ENCODE measurements at regions of chr13 and their contacts with region 1.

Region 1: GRCh38 chr13:40318366-40318765 is 348.1 kb downstream of the FOXO1 start:
- DNase-seq: no peak
- ATAC-seq: no peak
- H3K4me3 ChIP-seq: no peak overlapping the region
- H3K4me3 Mint-ChIP-seq: peak overlapping the region in 1 of 10 donors; percentile 20
- H3K27ac ChIP-seq: no peak overlapping the region
- H3K27ac Mint-ChIP-seq: peak overlapping the region in 5 of 9 donors; percentile 17 to 85 (median 67)
- H3K4me1 ChIP-seq: peaks cover 5 to 35% of the 10 kb centered on the region in 2 donors
- H3K4me1 Mint-ChIP-seq: peaks cover 39 to 71% (median 68%) of the 10 kb centered on the region in 7 donors
- H3K27me3 ChIP-seq: no peaks in the 10 kb centered on the region
- H3K27me3 Mint-ChIP-seq: no peaks in the 10 kb centered on the region

Region 2: DNA sequence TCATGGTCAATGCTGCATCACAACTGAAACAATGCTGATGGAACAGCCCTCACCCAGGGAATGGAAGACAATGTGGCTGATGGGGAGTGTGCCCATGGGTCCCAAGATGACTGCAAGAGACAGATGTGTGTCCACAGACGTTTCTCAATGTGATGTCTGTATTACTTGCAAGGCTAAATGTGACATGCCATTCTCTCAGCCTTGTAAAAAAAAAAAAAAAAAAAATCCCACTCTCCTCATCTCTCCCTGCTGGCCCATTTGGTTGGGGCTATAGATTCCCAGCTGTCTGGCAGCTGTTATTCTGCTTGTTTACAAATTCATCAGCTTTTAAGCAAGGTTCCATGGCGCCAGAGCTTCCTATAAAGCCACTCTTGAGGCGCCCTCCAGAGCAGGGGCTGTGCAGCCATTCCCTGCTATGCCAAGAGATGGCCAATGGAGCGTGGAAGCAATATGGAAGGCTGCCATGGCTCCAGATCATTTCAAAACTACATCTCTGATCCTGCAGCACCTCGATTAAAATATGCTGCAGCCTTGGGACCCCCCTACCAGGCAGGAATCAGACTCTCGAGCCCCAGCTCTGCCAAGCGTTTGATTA is 53.3 kb after region 1 on chr13:
- CTCF ChIA-PET with region 1: no interaction called
- POLR2A ChIA-PET with region 1: no interaction called
- intact Hi-C with region 1: loop called in 1 of 2 experiments (anchors 5 kb)
- DNase-seq: no peak
- ATAC-seq: no peak
- H3K4me3 ChIP-seq: no peak overlapping the region
- H3K4me3 Mint-ChIP-seq: peak overlapping the region in 7 of 10 donors; percentile 34 to 63 (median 54)
- H3K27ac ChIP-seq: no peak overlapping the region
- H3K27ac Mint-ChIP-seq: peak overlapping the region in 5 of 9 donors; percentile 21 to 84 (median 30)
- H3K4me1 ChIP-seq: peaks cover 8 to 27% of the 10 kb centered on the region in 2 donors
- H3K4me1 Mint-ChIP-seq: peaks cover 23 to 56% (median 48%) of the 10 kb centered on the region in 7 donors
- H3K27me3 ChIP-seq: no peaks in the 10 kb centered on the region
- H3K27me3 Mint-ChIP-seq: no peaks in the 10 kb centered on the region

Region 3: DNA sequence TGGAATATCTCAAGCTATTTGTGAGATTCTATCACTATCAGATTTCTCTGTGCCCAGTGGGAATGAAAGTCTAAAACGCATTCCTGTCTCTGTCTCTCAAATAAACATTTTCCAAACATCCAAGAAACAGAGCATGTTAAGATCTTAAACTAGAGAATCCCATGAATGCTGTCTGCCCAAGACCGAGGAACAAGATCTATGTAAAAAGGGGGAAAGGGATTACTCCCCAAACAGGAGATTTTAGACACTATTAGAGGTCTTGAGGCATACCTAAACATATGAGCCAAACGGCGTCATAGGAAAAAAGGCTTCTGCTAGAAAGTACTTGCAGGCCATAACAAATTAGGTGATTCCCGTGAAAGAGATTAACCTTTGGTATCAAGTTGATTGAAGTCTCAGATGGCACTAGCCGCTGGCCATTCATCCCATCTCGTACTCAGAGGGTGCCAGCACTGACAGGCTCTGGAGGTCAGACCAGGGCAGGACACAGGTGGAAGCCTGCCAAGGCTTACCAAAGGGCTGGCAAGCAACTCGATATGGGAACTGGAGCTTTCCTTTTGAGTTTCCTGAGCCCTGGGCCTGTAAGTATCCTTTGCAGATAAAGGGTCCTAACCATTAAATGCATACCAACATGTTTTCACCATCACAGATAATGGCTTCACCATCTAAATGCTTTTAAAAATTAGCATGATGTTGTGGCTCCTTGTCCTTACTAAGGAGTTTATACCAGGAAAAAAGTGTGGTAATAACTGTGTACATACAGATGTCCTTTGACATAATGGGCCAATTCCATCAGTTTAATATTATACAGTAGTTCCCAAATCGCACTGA is 122.8 kb after region 1 on chr13:
- CTCF ChIA-PET with region 1: no interaction called
- POLR2A ChIA-PET with region 1: interaction called, 7 read pairs
- intact Hi-C with region 1: loop called in 1 of 2 experiments (anchors 5 kb)
- DNase-seq: no peak
- ATAC-seq: no peak
- H3K4me3 ChIP-seq: no peak overlapping the region
- H3K4me3 Mint-ChIP-seq: no peak overlapping the region
- H3K27ac ChIP-seq: no peak overlapping the region
- H3K27ac Mint-ChIP-seq: no peak overlapping the region
- H3K4me1 ChIP-seq: peaks cover 4 to 24% of the 10 kb centered on the region in 2 donors
- H3K4me1 Mint-ChIP-seq: peaks cover 16 to 33% (median 28%) of the 10 kb centered on the region in 7 donors
- H3K27me3 ChIP-seq: no peaks in the 10 kb centered on the region
- H3K27me3 Mint-ChIP-seq: no peaks in the 10 kb centered on the region

Measured in naive thymus-derived CD4-positive, alpha-beta T cell (primary cell).